ENCODE measurements at regions of chr6 and their contacts with region 1.

Region 1: DNA sequence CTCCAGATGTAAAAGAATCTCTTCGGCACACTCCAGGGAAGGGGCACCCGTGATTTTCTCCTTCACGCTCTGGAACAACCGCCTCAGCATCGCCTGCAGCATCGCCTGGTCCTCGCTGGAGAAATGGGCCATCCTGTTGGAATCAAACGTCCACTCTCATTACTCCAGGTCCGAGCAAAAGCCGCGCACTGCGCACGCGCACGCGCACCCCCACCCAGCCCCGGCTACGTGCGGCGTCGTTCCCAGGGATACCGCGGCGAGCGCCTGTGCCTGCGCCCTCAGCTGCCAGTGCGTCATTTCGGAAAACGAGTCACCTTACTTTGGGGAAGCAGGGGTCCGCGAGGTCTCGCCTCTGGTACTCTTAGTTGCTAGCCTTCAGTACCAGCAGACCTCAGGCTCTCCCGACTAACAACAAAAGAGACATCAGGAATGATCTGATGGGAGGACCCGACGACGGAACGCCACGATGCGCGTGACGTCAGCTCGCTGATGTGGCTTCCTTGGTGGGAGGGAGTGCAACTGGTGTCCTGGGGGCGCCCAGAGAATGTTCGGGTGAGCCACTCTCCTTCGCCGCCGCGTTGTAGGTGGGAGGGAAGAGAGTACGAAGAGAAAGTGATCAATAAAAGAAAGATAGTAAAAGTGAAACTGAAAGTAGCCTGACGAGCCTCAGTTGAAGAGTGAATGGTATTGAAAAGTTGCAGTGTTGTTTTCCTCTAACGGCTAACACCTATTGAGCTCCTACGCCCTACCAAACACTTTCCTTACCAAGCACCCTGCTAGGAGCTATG is at the start of gene TBC1D32:
- DNase-seq: peak; percentile 86 to 87
- H3K4me3 ChIP-seq: peak within 1 kb of the TSS; percentile 64 to 80 (median 80)
- H3K27ac ChIP-seq: peak within 1 kb of the TSS; percentile 98 to 100
- H3K4me1 ChIP-seq: no peaks in the 10 kb centered on the region
- H3K27me3 ChIP-seq: no peaks in the 10 kb centered on the region
- CTCF ChIP-seq: peak in 2 of 3 donors; percentile 13 to 21
- POLR2A ChIP-seq: peak; percentile 7
- total RNA-seq, gene TBC1D32: 5.8 to 26.3 (median 18.7) TPM

Region 2: GRCh38 chr6:120869397-120869796 is 465.1 kb before region 1 on chr6:
- intact Hi-C with region 1: no loop called
- DNase-seq: no peak
- H3K4me3 ChIP-seq: no peak overlapping the region
- H3K27ac ChIP-seq: no peak overlapping the region
- H3K4me1 ChIP-seq: no peaks in the 10 kb centered on the region
- H3K27me3 ChIP-seq: no peaks in the 10 kb centered on the region
- CTCF ChIP-seq: no peak
- POLR2A ChIP-seq: no peak

Region 3: DNA sequence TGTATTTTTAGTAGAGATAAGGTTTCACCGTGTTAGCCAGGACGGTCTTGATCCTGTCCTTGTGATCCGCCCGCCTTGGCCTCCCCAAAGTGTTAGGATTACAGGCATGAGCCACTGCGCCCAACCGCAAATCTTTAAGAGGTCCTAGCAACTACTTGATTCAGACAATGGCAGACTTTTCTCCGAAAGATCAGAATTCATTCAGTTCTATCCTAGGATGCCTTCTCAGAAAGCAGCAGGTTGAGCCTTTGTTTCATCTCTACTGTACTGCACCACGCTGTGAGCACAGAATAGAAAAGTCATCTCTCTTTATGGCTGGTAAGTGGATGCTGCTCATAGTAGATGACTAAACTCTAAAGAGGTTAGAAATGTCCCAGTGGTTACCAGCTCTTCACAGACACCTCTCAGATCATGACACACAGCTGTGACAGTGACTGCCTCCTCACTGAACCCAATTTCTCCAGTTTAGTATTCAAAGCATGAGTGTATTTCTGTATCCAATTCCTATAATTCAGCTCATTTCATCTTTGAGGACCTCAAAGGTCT is 1058.9 kb after region 1 on chr6:
- intact Hi-C with region 1: no loop called
- DNase-seq: no peak
- H3K4me3 ChIP-seq: no peak overlapping the region
- H3K27ac ChIP-seq: no peak overlapping the region
- H3K4me1 ChIP-seq: no peaks in the 10 kb centered on the region
- H3K27me3 ChIP-seq: no peaks in the 10 kb centered on the region
- CTCF ChIP-seq: no peak
- POLR2A ChIP-seq: no peak

Region 4: GRCh38 chr6:122571888-122572287 is 1237.4 kb after region 1 on chr6:
- intact Hi-C with region 1: loop called (anchors 5 kb)
- DNase-seq: no peak
- H3K4me3 ChIP-seq: no peak overlapping the region
- H3K27ac ChIP-seq: no peak overlapping the region
- H3K4me1 ChIP-seq: no peaks in the 10 kb centered on the region
- H3K27me3 ChIP-seq: no peaks in the 10 kb centered on the region
- CTCF ChIP-seq: no peak
- POLR2A ChIP-seq: no peak

Measured in breast epithelium (tissue), 4 donors.